PC-3 (cell line): ENCODE measurements at regions of chr22 and their contacts with region 1.

Region 1: GRCh38 chr22:22710719-22711531 is 66.5 kb downstream of the GGTLC2 start:
- DNase-seq: peak; percentile 71
- ATAC-seq: peak; percentile 58
- H3K4me3 ChIP-seq: no peak overlapping the region
- H3K27ac ChIP-seq: peak overlapping the region; percentile 93
- H3K4me1 ChIP-seq: peaks cover 30% of the 10 kb centered on the region
- H3K27me3 ChIP-seq: no peaks in the 10 kb centered on the region
- CTCF ChIP-seq: peak; percentile 93

Region 2: GRCh38 chr22:22655452-22656290 is 55.3 kb before region 1 on chr22:
- CTCF ChIA-PET with region 1: no interaction called
- POLR2A ChIA-PET with region 1: no interaction called
- intact Hi-C with region 1: no loop called
- DNase-seq: no peak
- ATAC-seq: no peak
- H3K4me3 ChIP-seq: no peak overlapping the region
- H3K27ac ChIP-seq: no peak overlapping the region
- H3K4me1 ChIP-seq: no peaks in the 10 kb centered on the region
- H3K27me3 ChIP-seq: peaks cover 34% of the 10 kb centered on the region
- CTCF ChIP-seq: no peak

Region 3: DNA sequence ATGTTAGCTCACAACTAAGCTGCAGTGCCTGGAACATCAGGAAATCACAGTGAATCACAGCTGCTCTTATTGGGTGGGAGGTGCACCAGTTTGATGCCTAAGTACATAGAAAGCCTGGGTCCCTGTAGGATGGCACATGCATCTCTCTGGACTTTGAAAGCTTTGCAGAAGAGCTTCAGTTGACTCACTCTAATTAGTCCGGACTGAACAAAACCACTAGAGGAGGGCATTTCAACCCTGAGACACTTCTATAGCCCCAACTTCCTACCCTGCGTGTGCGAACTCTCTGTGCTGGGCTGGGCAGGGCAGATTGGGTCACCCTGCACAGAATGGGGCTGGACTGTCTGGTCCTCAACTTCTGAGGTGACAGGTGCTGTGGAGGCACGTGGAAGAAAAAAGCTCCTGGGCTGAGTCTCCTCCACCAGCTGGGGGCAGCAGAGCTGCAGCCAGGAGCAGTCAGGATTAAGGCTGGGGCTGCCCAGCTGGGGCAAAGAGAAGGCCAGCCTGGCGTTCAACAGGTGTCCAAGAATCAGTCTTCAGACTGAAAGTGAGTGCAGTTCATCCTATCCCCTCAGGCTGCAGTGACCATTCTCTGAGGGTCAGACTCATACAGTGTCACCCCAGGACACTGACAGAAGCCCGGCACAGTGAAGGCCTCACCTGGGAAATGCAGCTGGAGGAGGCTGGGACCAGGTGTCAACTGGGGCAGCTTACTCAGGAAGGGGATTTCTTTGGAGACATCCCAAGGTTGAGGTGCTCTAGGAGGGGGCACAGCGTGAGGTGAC is 44.4 kb before region 1 on chr22:
- CTCF ChIA-PET with region 1: interaction called, 3 read pairs
- POLR2A ChIA-PET with region 1: no interaction called
- intact Hi-C with region 1: loop called (anchors 1 kb)
- DNase-seq: peak; percentile 65
- ATAC-seq: peak; percentile 77
- H3K4me3 ChIP-seq: no peak overlapping the region
- H3K27ac ChIP-seq: no peak overlapping the region
- H3K4me1 ChIP-seq: no peaks in the 10 kb centered on the region
- H3K27me3 ChIP-seq: peaks cover 4% of the 10 kb centered on the region; the same call in 1 of the 2 replicates
- CTCF ChIP-seq: peak; percentile 74